Posterior vena cava (tissue), 2 donors: ENCODE measurements at regions of chr10 and their contacts with region 1.

Region 1: DNA sequence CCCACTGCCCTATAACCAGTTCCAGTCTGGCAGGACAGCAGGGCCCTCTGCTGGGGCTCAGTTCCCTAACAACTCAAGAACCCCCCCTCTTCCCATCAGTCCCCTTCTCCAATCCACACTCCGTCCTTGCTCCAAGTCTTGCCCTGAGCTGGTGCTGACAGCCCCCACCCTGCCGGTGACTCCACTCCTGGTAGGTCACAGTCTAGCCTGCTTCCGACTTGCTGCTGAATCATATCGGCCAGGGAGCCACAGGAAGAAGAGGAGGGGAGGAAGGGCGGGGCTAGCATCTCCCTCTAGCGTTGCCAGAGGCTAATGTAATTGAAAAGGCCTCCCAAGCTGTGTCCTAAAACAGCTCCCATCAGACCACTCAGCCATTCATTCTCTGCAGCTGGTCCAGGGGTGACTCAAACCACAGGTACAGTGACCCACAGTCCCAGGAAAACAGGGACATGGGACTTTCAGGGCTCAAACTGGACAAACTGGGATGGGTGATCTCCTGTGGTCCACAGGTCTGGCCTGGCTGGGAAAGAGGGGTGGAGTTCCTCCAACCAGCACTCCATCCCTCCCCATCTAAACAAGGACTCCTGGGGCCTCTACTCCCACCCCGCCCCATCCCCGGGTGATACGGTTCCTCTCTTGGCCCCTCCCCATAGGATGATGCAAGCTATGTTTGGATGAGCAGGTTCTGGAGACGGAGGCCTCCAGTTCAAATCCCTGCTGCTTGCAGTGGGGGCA is 158.8 kb downstream of the SH3PXD2A start:
- DNase-seq: peak; percentile 94

Region 2: DNA sequence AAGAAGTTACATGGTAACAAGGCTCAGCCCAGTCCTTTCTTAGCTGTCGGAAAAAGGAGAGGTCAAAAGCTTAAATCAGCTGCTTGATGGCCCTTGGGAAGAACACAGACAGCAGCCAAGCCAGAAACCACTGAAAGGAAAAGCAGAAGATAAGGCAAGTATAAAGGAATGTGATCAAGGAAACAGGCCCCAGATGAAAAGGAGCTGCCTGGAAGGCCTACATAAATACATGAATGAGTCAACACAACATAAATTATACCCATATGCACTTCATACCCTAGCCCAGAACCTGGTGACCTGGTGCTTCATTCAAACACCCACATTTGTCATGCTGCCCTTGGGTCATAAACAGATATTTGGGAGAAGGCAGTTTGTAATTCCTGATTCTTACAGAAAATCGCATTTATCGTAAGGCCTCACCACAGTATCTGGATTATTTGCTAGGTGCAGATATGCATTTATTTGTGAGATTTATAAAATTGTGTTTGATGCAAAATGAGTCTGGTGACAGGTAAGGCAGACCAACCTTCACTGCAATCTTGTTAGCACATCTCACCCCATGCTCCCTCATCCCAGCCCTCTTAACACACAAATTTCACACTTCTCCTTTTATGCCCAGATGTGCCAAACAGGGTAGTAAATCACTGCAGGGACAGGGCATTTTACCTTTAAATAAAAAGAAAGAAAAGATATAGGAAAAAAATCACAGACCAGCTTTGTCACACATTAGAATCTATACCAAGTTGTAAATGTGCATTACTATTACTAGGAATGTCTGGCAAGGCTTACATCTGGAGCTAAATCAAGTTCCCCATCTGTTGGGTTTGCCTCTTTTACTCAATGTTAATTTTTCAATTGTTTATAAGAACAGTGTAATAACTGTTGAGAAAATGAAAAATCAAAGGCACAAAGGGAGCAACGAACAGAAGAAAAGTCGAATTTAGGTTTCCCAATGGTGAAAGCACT is 1758.0 kb before region 1 on chr10:
- intact Hi-C with region 1: loop called in 1 of 2 experiments (anchors 5 kb)
- DNase-seq: no peak

Region 3: GRCh38 chr10:103502849-103503660 is 193.5 kb before region 1 on chr10:
- intact Hi-C with region 1: no loop called
- DNase-seq: peak; percentile 68

Region 4: DNA sequence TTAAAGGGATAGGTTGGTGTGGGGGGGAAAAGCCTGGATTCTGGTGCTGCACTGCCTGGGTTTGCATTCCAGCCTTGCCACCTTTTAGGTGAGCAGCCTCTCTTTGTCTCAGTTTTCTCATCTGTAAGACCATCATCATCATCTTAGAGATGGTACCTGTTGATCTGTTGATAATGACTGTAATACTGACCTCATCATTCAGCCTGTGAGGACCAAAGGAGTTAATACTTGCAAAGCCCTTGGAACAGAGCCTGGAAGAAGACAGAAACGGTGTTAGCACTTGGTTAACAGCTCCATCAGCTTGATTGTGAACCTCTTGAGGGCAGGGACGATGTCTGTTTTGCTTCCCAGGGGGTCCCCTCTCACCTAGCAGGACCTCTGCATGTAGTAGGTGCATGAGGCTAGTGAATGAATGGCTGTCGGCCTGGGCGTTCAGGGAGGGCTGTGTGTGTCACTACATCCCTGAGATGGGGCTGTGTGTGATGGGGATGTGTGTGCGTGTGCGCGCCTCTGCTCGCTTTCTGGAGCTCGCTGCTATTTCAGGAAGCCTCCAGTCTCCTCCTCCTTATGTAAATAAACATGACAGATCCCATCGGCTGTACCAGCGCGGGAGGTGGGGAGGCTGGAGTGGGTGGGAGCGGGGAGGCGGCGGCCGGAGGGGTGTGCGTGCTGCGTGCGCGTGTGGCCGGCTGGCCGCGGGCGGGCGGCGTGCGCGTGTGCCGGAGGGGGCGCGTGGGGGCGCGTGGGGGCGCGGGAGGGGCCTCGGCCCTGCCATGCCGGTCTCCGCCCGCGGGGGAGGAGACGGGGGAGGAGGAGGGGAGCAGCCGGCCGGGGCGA is 141.9 kb before region 1 on chr10:
- intact Hi-C with region 1: no loop called
- DNase-seq: peak; percentile 84